Thyroid gland (tissue), 4 donors: ENCODE measurements at regions of chr9 and their contacts with region 1.

Region 1: GRCh38 chr9:13427587-13427986 is 148.1 kb upstream of the MPDZ start:
- DNase-seq: no peak
- H3K4me3 ChIP-seq: no peak overlapping the region
- H3K27ac ChIP-seq: peak overlapping the region in 1 of 3 donors; percentile 23
- H3K4me1 ChIP-seq: no peaks in the 10 kb centered on the region
- H3K27me3 ChIP-seq: no peaks in the 10 kb centered on the region
- CTCF ChIP-seq: peak; percentile 52 to 85 (median 67)
- POLR2A ChIP-seq: no peak

Region 2: GRCh38 chr9:14353222-14354056 is 925.9 kb after region 1 on chr9:
- intact Hi-C with region 1: loop called (anchors 5 kb)
- DNase-seq: peak; percentile 94 to 96
- H3K4me3 ChIP-seq: no peak overlapping the region
- H3K27ac ChIP-seq: peak overlapping the region in 2 of 3 donors; percentile 34 to 74
- H3K4me1 ChIP-seq: peaks cover 17 to 25% of the 10 kb centered on the region in 2 donors
- H3K27me3 ChIP-seq: peaks cover 12% of the 10 kb centered on the region
- CTCF ChIP-seq: peak; percentile 59 to 92 (median 86)
- POLR2A ChIP-seq: no peak

Region 3: DNA sequence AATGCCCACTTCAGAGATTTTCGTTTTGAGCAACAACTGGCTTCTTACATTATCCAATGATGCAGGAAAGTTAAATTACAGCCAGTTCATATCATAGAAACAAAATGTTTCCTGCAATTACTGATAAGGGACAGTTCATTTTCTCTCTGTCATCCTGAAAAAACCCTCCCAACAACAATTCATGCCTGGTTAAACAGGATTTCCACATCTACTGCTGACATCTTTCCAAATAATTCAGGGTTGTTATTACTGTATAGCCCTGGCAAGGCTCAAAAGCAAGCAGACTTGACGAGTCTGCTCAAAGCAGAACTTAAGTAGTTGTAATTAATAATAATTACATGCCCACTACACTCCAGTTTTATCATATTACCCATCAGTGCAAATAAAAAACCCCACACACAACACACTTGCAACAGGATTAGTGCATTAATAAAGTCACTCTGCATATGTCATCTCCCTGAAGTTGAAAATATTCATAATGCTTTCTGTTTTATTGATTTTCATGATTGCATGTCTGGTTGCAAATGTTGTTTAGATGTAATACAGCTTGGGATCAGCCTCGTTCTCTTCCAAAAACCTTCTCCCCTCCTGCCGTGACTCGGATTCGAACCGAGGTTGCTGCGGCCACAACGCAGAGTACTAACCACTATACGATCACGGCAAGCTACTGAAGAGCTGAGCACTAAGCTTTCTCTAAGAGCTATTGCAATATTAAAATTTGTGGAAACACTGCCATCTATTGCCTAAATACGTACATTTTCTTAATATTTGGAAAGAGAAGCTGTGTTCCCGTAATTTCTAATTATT is 1006.0 kb after region 1 on chr9:
- intact Hi-C with region 1: loop called (anchors 10 kb)
- DNase-seq: no peak
- H3K4me3 ChIP-seq: no peak overlapping the region
- H3K27ac ChIP-seq: no peak overlapping the region
- H3K4me1 ChIP-seq: peaks cover 0 to 24% of the 10 kb centered on the region in 2 donors
- H3K27me3 ChIP-seq: no peaks in the 10 kb centered on the region
- CTCF ChIP-seq: peak in 3 of 6 experiments; percentile 30 to 43 (median 30)
- POLR2A ChIP-seq: no peak